HepG2 (cell line): ENCODE measurements at regions of chr11 and their contacts with region 1.

Region 1: GRCh38 chr11:40306938-40307548 is 1152.4 kb downstream of the LRRC4C start:
- DNase-seq: peak; percentile 10
- ATAC-seq: peak; percentile 80
- H3K4me3 ChIP-seq: no peak overlapping the region
- H3K27ac ChIP-seq: no peak overlapping the region
- H3K4me1 ChIP-seq: no peaks in the 10 kb centered on the region
- H3K27me3 ChIP-seq: no peaks in the 10 kb centered on the region
- CTCF ChIP-seq: peak; percentile 63
- EP300 ChIP-seq: no peak
- POLR2A ChIP-seq: no peak
- RAD21 ChIP-seq: no peak

Region 2: GRCh38 chr11:40054631-40055030 is 252.4 kb before region 1 on chr11:
- CTCF ChIA-PET with region 1: no interaction called
- POLR2A ChIA-PET with region 1: no interaction called
- in situ Hi-C with region 1: no loop called
- intact Hi-C with region 1: no loop called
- DNase-seq: no peak
- ATAC-seq: no peak
- H3K4me3 ChIP-seq: no peak overlapping the region
- H3K27ac ChIP-seq: no peak overlapping the region
- H3K4me1 ChIP-seq: no peaks in the 10 kb centered on the region
- H3K27me3 ChIP-seq: no peaks in the 10 kb centered on the region
- CTCF ChIP-seq: no peak
- EP300 ChIP-seq: no peak
- POLR2A ChIP-seq: no peak
- RAD21 ChIP-seq: no peak

Region 3: GRCh38 chr11:40445391-40445790 is 138.3 kb after region 1 on chr11:
- CTCF ChIA-PET with region 1: no interaction called
- POLR2A ChIA-PET with region 1: no interaction called
- in situ Hi-C with region 1: no loop called
- intact Hi-C with region 1: no loop called
- DNase-seq: peak; percentile 8
- ATAC-seq: no peak
- H3K4me3 ChIP-seq: no peak overlapping the region
- H3K27ac ChIP-seq: no peak overlapping the region
- H3K4me1 ChIP-seq: no peaks in the 10 kb centered on the region
- H3K27me3 ChIP-seq: no peaks in the 10 kb centered on the region
- CTCF ChIP-seq: no peak
- EP300 ChIP-seq: no peak
- POLR2A ChIP-seq: no peak
- RAD21 ChIP-seq: no peak

Region 4: GRCh38 chr11:40722179-40722795 is 415.2 kb after region 1 on chr11:
- CTCF ChIA-PET with region 1: interaction called, 12 read pairs
- POLR2A ChIA-PET with region 1: no interaction called
- in situ Hi-C with region 1: loop called (anchors 10 kb)
- intact Hi-C with region 1: loop called (anchors 1 kb)
- DNase-seq: peak; percentile 15
- ATAC-seq: peak; percentile 87
- H3K4me3 ChIP-seq: no peak overlapping the region
- H3K27ac ChIP-seq: no peak overlapping the region
- H3K4me1 ChIP-seq: no peaks in the 10 kb centered on the region
- H3K27me3 ChIP-seq: no peaks in the 10 kb centered on the region
- CTCF ChIP-seq: peak; percentile 71
- EP300 ChIP-seq: no peak
- POLR2A ChIP-seq: no peak
- RAD21 ChIP-seq: no peak

Region 5: DNA sequence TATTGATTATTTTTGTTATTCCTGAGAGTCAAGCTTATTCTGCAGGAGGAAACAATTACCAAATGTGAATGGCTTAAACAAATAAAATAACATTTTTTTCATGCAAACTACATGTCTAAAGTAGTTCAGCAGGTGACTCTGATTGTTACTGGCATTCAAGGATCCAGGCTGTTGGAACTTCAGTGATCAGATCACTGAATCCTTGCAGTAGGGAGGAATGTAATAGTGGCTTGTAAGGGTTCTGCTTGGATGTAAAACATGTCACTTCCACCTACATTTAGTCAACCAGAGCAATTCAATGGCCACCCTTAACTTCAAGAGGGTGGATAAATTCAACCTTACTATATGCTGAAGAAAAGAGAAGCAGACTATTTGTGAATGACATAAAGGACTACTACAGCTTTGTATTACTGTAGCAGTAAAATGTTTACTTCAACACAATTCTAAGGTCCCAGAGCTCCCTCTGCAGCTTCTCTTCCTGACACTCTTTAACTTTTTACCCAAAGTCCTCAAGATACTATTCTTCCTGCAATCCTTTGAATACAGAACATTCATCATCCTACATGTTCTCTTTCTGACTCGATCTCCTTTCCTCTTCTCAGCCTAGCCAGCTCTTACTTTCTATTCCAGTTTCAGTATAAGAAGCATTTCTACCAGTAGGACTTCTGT is 868.4 kb after region 1 on chr11:
- CTCF ChIA-PET with region 1: no interaction called
- POLR2A ChIA-PET with region 1: no interaction called
- in situ Hi-C with region 1: loop called (anchors 25 kb)
- intact Hi-C with region 1: no loop called
- DNase-seq: no peak
- ATAC-seq: no peak
- H3K4me3 ChIP-seq: no peak overlapping the region
- H3K27ac ChIP-seq: no peak overlapping the region
- H3K4me1 ChIP-seq: no peaks in the 10 kb centered on the region
- H3K27me3 ChIP-seq: no peaks in the 10 kb centered on the region
- CTCF ChIP-seq: peak; percentile 31; the same call in 1 of the 2 replicates
- EP300 ChIP-seq: no peak
- POLR2A ChIP-seq: no peak
- RAD21 ChIP-seq: no peak